Panc1 (cell line): ENCODE measurements at regions of chr17 and their contacts with region 1.

Region 1: GRCh38 chr17:79612468-79613194 is 1.8 kb upstream of the RBFOX3 start:
- DNase-seq: no peak
- ATAC-seq: peak; percentile 84
- H3K4me3 ChIP-seq: no peak overlapping the region
- H3K27ac ChIP-seq: no peak overlapping the region
- H3K4me1 ChIP-seq: peaks cover 3% of the 10 kb centered on the region; the same call in 1 of the 2 replicates
- H3K27me3 ChIP-seq: peaks cover 33% of the 10 kb centered on the region
- CTCF ChIP-seq: peak; percentile 98

Region 2: GRCh38 chr17:79437856-79438457 is 174.7 kb before region 1 on chr17:
- CTCF ChIA-PET with region 1: interaction called, 4 read pairs
- POLR2A ChIA-PET with region 1: no interaction called
- in situ Hi-C with region 1: no loop called
- intact Hi-C with region 1: loop called (anchors 10 kb)
- DNase-seq: no peak
- ATAC-seq: no peak
- H3K4me3 ChIP-seq: no peak overlapping the region
- H3K27ac ChIP-seq: no peak overlapping the region
- H3K4me1 ChIP-seq: no peaks in the 10 kb centered on the region
- H3K27me3 ChIP-seq: 0 out of 2 replicates have a peak, but pooled peaks cover 7% of the 10 kb centered on the region
- CTCF ChIP-seq: no peak

Region 3: DNA sequence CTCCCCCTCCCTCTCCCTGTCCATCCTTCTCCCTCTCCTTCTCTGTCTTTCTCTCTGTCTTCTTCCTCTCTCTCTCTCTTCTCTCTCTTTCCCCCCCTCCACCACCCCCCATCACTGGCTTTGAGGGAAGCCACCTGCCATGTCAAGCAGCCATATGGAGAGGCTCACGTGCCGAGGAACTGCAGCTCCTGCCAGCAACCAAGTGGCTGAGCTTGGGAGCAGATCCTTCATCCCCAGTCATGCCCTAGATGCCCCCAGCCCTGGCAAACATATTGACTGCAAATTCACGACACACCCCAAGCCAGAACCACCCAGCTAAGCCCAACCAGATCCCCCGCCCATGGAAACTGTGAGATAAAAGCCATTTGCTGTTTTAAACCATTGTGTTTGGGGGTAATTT is 39.1 kb after region 1 on chr17:
- CTCF ChIA-PET with region 1: no interaction called
- POLR2A ChIA-PET with region 1: no interaction called
- in situ Hi-C with region 1: no loop called
- intact Hi-C with region 1: no loop called
- DNase-seq: no peak
- ATAC-seq: no peak
- H3K4me3 ChIP-seq: no peak overlapping the region
- H3K27ac ChIP-seq: no peak overlapping the region
- H3K4me1 ChIP-seq: no peaks in the 10 kb centered on the region
- H3K27me3 ChIP-seq: peaks cover 24% of the 10 kb centered on the region
- CTCF ChIP-seq: no peak

Region 4: DNA sequence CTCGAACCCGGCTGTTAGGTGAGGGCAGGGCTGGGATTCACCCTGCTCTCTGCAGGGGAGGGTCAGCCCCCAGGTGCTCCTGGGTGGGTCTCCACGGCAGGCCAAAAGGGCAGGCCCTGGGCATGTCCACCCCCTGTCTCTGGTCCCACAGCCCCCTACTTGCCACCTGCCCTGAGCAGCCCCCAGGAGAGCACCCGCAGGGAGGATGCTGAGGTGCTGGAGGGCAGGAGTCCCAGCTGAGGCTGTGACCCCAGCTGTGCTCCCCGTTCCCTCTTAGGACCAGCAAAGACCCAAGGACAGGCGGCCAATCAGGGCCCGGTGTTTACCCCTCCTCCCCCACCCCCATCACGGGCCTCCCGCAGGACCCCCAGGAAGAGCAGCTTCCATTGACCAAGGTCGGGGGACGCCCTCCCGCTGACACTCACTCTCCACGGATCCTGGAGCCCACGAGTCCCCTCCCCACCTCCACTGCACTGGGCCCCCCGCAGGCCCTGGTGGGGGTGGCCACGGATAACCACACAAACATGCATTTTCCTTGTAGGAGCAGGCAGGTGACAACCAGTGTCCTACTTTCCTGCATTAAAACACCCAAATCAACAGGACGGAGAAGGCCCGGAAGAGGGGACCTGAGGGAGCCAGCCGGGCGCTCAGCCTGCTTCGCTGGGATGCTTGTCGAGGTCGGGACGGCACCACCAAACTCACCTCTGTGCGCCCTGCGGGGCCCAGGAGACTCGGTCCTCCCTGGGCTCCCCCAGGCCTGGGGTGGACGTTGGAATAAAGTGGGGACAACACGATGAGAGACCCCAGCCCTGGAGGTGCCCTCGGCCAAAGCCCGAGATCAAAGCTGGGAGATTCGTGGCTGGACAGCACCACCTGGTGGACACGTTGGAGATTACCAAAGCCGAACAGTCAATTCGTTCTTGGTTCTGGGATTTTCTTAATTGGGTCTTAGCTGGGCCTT is 95.6 kb after region 1 on chr17:
- CTCF ChIA-PET with region 1: no interaction called
- POLR2A ChIA-PET with region 1: no interaction called
- in situ Hi-C with region 1: no loop called
- intact Hi-C with region 1: loop called (anchors 10 kb)
- DNase-seq: peak; percentile 7
- ATAC-seq: peak; percentile 83
- H3K4me3 ChIP-seq: no peak overlapping the region
- H3K27ac ChIP-seq: no peak overlapping the region
- H3K4me1 ChIP-seq: no peaks in the 10 kb centered on the region
- H3K27me3 ChIP-seq: no peaks in the 10 kb centered on the region
- CTCF ChIP-seq: peak; percentile 77